PC-3 (cell line): ENCODE measurements at regions of chr13 and their contacts with region 1.

Region 1: DNA sequence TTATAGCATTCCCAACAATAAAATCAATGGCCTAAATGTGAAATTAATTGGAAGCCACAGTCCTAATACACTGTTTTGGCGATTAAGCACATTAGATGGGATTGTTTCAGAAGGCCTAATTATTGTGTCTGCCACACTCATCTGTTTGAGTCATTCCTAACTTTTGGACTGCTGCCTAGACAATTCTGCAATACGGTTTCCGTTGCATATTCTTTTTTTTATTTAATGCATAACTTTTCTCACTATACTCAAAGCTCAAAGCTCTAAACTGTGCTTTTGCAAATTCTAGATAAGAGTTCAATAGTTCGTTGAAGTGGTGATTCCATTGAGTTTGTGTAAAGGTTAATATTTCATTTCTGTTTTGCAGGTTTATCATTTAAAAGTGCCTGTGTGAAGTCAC is 53.1 kb downstream of the MBNL2 start:
- DNase-seq: peak; percentile 75
- ATAC-seq: peak; percentile 54
- H3K4me3 ChIP-seq: no peak overlapping the region; the same call in 1 of the 2 replicates
- H3K27ac ChIP-seq: peak overlapping the region; percentile 76
- H3K4me1 ChIP-seq: peaks cover 55% of the 10 kb centered on the region
- H3K27me3 ChIP-seq: no peaks in the 10 kb centered on the region
- CTCF ChIP-seq: no peak

Region 2: GRCh38 chr13:97257800-97258799 is 17.2 kb before region 1 on chr13:
- CTCF ChIA-PET with region 1: no interaction called
- POLR2A ChIA-PET with region 1: no interaction called
- intact Hi-C with region 1: loop called (anchors 1 kb)
- DNase-seq: peak; percentile 82
- ATAC-seq: peak; percentile 50
- H3K4me3 ChIP-seq: peak overlapping the region; percentile 28; the same call in 1 of the 2 replicates
- H3K27ac ChIP-seq: peak overlapping the region; percentile 93
- H3K4me1 ChIP-seq: peaks cover 67% of the 10 kb centered on the region
- H3K27me3 ChIP-seq: no peaks in the 10 kb centered on the region
- CTCF ChIP-seq: peak; percentile 39

Region 3: DNA sequence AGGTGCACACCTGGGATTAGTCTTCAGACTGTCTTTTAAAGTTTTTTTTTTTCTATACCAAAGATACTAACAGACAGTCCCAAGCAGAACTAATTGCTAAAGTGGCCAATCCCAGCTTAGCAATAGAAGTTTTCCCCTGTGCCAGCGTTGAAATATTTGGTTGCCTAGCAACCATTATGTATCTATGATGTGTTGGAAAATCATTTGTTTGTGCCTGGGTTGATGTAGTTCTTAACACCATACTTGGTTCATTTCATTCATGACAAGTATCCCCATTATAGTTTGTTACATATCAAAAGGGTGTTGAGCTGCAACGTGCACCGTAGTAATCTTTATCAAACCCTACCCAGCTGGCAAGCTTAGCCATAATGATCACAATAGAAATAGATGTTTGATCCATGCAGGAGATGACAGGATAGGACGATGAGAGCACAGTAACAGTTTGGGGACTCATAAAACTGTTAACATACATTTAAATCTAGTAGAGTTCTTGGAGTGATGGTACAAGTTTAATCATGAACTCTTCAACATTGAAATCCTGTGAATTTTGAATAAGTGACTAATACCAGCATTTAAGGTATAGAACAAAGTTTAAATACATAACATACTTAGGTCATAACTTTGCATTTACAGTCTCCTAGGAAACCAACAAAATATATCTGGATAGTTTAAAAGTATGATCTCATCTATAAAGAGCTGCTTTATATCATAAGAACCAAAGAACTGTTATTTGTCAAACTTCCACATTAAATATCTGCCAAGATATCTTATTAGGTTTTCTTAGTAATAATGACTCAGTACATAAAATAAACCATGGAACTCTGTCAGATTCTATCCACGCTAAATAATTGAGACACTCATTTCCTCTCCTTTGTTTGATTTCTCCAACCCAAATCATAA is 20.3 kb after region 1 on chr13:
- CTCF ChIA-PET with region 1: no interaction called
- POLR2A ChIA-PET with region 1: no interaction called
- intact Hi-C with region 1: loop called (anchors 2 kb)
- DNase-seq: peak; percentile 92
- ATAC-seq: peak; percentile 85
- H3K4me3 ChIP-seq: peak overlapping the region; percentile 36; the same call in 1 of the 2 replicates
- H3K27ac ChIP-seq: peak overlapping the region; percentile 99
- H3K4me1 ChIP-seq: peaks cover 32% of the 10 kb centered on the region
- H3K27me3 ChIP-seq: no peaks in the 10 kb centered on the region
- CTCF ChIP-seq: no peak

Region 4: DNA sequence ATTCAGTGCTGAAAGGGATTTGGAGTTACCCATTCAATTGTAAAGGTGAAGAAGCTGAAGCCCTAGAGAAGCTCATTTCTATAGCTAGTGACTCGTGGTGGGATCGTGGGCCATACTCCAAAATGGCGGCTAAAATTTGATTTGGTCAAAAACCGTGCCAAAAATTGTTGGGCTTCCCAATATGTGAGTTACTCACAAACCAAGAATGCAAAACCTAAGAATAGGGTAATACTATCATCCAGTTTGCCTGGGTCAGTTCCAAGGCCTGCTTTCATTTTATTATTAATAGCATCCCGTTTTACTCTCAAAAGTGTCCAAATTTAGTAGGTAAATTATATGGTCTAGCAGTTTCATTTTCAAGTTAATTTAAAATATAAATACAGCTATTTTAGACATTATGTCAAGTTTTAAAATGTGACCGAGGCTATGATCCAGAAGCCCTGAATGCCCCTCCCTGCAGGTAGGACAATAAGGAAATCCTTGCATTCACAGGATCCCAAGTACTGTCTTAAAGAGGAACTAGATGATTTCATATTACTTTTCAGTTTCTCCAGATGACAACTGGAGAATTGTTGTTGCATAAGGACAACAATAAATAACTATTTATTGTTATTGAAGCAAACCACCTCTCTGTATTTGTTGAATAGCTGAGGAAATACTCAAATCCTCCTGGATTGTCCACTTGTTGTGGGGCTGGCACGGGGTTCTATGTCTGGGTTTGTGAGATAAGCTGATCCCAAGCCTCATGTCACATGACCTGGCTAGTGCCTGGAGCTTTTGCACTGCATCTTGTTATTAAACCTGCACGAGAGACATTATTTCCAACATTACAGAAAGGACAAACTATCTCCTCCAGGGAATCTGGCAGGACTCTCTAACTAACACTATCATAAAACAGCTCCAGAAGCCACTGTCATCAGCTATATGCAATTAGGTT is 147.1 kb after region 1 on chr13:
- CTCF ChIA-PET with region 1: no interaction called
- POLR2A ChIA-PET with region 1: no interaction called
- intact Hi-C with region 1: no loop called
- DNase-seq: no peak
- ATAC-seq: no peak
- H3K4me3 ChIP-seq: no peak overlapping the region
- H3K27ac ChIP-seq: no peak overlapping the region
- H3K4me1 ChIP-seq: no peaks in the 10 kb centered on the region
- H3K27me3 ChIP-seq: no peaks in the 10 kb centered on the region
- CTCF ChIP-seq: no peak